ENCODE measurements at regions of chr9 and their contacts with region 1.

Region 1: GRCh38 chr9:77820293-77820954 is 172.3 kb upstream of the GNA14 start:
- DNase-seq: peak; percentile 65
- H3K4me3 ChIP-seq: no peak overlapping the region
- H3K27me3 ChIP-seq: no peaks in the 10 kb centered on the region
- CTCF ChIP-seq: no peak

Region 2: GRCh38 chr9:76618762-76619161 is 1201.7 kb before region 1 on chr9:
- CTCF ChIA-PET with region 1: no interaction called
- POLR2A ChIA-PET with region 1: interaction called, 13 read pairs
- DNase-seq: peak; percentile 98
- H3K4me3 ChIP-seq: no peak overlapping the region
- H3K27me3 ChIP-seq: no peaks in the 10 kb centered on the region
- CTCF ChIP-seq: no peak

Region 3: GRCh38 chr9:78089101-78089500 is 268.7 kb after region 1 on chr9:
- CTCF ChIA-PET with region 1: no interaction called
- POLR2A ChIA-PET with region 1: no interaction called
- DNase-seq: no peak
- H3K4me3 ChIP-seq: no peak overlapping the region
- H3K27me3 ChIP-seq: no peaks in the 10 kb centered on the region
- CTCF ChIP-seq: no peak

Region 4: GRCh38 chr9:78235756-78236538 is 415.5 kb after region 1 on chr9 and contains the start of gene CEP78:
- CTCF ChIA-PET with region 1: no interaction called
- POLR2A ChIA-PET with region 1: interaction called, 19 read pairs
- DNase-seq: peak; percentile 60
- H3K4me3 ChIP-seq: peak within 1 kb of the TSS; percentile 86
- H3K27me3 ChIP-seq: no peaks in the 10 kb centered on the region
- CTCF ChIP-seq: no peak
- polyA plus RNA-seq, gene CEP78: 4.5 and 9.7 TPM in 2 replicates

Measured in BJ (cell line).